SK-N-SH (cell line): ENCODE measurements at regions of chr15 and their contacts with region 1.

Region 1: GRCh38 chr15:90320061-90320884 is 31.8 kb upstream of the ZNF774 start:
- DNase-seq: peak; percentile 85
- H3K4me3 ChIP-seq: peak overlapping the region in 1 of 2 experiments; percentile 13; a peak in 1 of 4 replicates
- H3K27ac ChIP-seq: no peak overlapping the region
- H3K4me1 ChIP-seq: peaks cover 0 to 5% of the 10 kb centered on the region in 2 experiments; a peak in 1 of 4 replicates
- H3K27me3 ChIP-seq: no peaks in the 10 kb centered on the region
- CTCF ChIP-seq: peak; percentile 97
- EP300 ChIP-seq: no peak
- RAD21 ChIP-seq: peak; percentile 98

Region 2: GRCh38 chr15:90300988-90301706 is 19.1 kb before region 1 on chr15:
- CTCF ChIA-PET with region 1: interaction called, 41 read pairs
- POLR2A ChIA-PET with region 1: no interaction called
- DNase-seq: peak; percentile 70
- H3K4me3 ChIP-seq: no peak overlapping the region; a peak in 1 of 4 replicates
- H3K27ac ChIP-seq: peak overlapping the region in 1 of 2 experiments; percentile 36; a peak in 1 of 4 replicates
- H3K4me1 ChIP-seq: peaks cover 0 to 9% of the 10 kb centered on the region in 2 experiments; a peak in 1 of 4 replicates
- H3K27me3 ChIP-seq: no peaks in the 10 kb centered on the region
- CTCF ChIP-seq: peak; percentile 79
- EP300 ChIP-seq: no peak
- RAD21 ChIP-seq: peak; percentile 46

Region 3: DNA sequence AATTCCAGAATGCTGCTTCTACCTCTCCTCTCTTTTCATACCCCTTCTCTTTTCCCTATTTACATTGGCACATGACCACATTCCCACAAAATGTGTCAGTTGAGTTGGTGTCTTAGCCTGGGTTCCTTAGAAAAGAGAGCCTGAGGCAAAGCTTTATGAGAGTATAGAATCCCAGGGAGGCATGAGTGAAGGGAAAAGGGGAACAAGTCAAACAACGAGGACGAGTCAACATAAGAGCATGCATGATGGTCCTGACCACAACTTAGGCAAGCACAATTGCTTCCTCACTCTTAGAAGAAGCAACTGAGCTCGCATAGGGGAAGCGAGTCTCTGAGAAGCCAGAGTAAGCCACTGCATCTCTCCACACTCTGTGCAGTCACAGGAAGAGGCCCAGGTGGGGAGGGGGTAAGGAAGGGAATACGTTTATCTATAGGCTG is 16.4 kb after region 1 on chr15:
- CTCF ChIA-PET with region 1: interaction called, 28 read pairs
- POLR2A ChIA-PET with region 1: no interaction called
- DNase-seq: no peak
- H3K4me3 ChIP-seq: no peak overlapping the region
- H3K27ac ChIP-seq: peak overlapping the region in 1 of 2 experiments; percentile 52; a peak in 2 of 4 replicates
- H3K4me1 ChIP-seq: peaks cover 0 to 8% of the 10 kb centered on the region in 2 experiments; a peak in 1 of 4 replicates
- H3K27me3 ChIP-seq: no peaks in the 10 kb centered on the region
- CTCF ChIP-seq: no peak
- EP300 ChIP-seq: no peak
- RAD21 ChIP-seq: no peak

Region 4: GRCh38 chr15:90421527-90421926 is 101.3 kb after region 1 on chr15:
- CTCF ChIA-PET with region 1: interaction called, 12 read pairs
- POLR2A ChIA-PET with region 1: no interaction called
- DNase-seq: no peak
- H3K4me3 ChIP-seq: no peak overlapping the region
- H3K27ac ChIP-seq: peak overlapping the region in 1 of 2 experiments; percentile 96; a peak in 2 of 4 replicates
- H3K4me1 ChIP-seq: peaks cover 0 to 63% of the 10 kb centered on the region in 2 experiments; a peak in 2 of 4 replicates
- H3K27me3 ChIP-seq: no peaks in the 10 kb centered on the region
- CTCF ChIP-seq: no peak
- EP300 ChIP-seq: no peak
- RAD21 ChIP-seq: no peak

Region 5: DNA sequence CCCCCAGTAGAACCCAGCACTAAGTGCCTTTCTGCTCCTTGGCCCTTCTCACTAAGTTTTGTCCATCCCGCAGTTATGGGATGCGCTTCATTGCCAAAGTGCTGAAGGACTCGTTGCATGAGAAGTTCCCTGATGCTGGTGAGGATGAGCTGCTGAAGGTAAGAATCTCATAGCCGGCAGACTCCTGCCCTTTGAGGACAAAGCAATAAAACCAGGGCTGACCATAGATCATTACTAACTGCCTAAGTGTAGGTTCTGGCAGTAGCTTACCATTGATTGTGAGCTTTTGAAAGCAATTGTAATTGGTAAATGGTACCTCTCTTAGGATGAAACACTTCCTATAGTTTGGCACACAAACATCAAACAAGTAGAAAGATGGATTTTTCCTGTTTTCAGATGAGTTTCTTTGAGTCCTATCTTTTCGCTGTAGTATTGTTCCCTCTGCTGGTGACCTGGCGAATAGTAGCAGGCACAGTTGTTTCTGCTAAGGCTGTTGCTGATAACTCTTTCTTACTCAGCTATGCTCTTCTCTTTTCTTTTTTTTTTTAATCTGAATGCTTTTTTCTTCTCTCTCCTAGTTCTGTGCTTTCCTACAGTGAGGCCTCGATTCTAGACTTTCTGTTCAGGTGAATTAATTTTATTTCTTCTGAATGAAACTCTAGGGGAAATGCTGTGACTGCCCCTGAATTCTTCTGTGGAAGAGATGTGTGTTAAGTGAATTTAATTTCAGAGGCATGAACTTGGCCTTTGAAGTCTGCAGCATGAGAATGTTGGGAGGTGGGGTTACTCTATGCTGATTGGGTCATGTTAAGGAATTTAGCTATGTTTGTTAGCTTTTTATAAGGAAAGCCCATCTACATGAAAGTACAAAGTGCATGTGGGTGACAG is 162.1 kb after region 1 on chr15:
- CTCF ChIA-PET with region 1: interaction called, 116 read pairs
- POLR2A ChIA-PET with region 1: no interaction called
- DNase-seq: peak; percentile 54
- H3K4me3 ChIP-seq: no peak overlapping the region; a peak in 1 of 4 replicates
- H3K27ac ChIP-seq: peak overlapping the region in 1 of 2 experiments; percentile 9; a peak in 3 of 4 replicates
- H3K4me1 ChIP-seq: peaks cover 0 to 17% of the 10 kb centered on the region in 2 experiments; a peak in 3 of 4 replicates
- H3K27me3 ChIP-seq: no peaks in the 10 kb centered on the region
- CTCF ChIP-seq: peak; percentile 89
- EP300 ChIP-seq: no peak
- RAD21 ChIP-seq: peak; percentile 92

Region 6: DNA sequence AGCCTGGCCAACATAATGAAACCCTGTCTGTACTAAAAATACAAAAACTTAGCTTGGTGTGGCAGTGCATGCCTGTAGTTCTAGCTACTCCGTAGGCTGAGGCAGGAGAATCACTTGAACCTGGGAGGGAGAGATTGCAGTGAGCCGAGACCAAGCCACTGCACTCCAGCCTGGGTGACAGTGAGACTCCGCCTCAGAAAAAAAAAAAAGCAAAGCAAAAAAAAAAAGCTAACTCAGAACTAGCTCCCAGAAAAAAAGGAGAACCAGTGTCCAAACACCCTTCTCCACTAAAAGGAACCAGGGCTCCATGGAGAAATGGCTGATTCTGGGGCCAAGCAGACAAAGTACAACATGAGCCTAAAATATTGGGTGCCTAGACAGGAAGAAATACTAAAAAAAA is 192.7 kb after region 1 on chr15:
- CTCF ChIA-PET with region 1: interaction called, 12 read pairs
- POLR2A ChIA-PET with region 1: no interaction called
- DNase-seq: no peak
- H3K4me3 ChIP-seq: no peak overlapping the region
- H3K27ac ChIP-seq: no peak overlapping the region
- H3K4me1 ChIP-seq: no peaks in the 10 kb centered on the region
- H3K27me3 ChIP-seq: no peaks in the 10 kb centered on the region
- CTCF ChIP-seq: no peak
- EP300 ChIP-seq: no peak
- RAD21 ChIP-seq: no peak